PC-9 (cell line): ENCODE measurements at regions of chr7 and their contacts with region 1.

Region 1: GRCh38 chr7:114554781-114555537 is 140.3 kb downstream of the FOXP2 start:
- DNase-seq: no peak
- H3K4me3 ChIP-seq: no peak overlapping the region
- H3K27ac ChIP-seq: no peak overlapping the region
- H3K4me1 ChIP-seq: no peaks in the 10 kb centered on the region
- H3K27me3 ChIP-seq: no peaks in the 10 kb centered on the region
- CTCF ChIP-seq: no peak

Region 2: GRCh38 chr7:114508086-114508485 is 46.9 kb before region 1 on chr7:
- CTCF ChIA-PET with region 1: no interaction called
- POLR2A ChIA-PET with region 1: no interaction called
- intact Hi-C with region 1: no loop called
- DNase-seq: no peak
- H3K4me3 ChIP-seq: no peak overlapping the region
- H3K27ac ChIP-seq: no peak overlapping the region
- H3K4me1 ChIP-seq: no peaks in the 10 kb centered on the region
- H3K27me3 ChIP-seq: no peaks in the 10 kb centered on the region
- CTCF ChIP-seq: no peak

Region 3: DNA sequence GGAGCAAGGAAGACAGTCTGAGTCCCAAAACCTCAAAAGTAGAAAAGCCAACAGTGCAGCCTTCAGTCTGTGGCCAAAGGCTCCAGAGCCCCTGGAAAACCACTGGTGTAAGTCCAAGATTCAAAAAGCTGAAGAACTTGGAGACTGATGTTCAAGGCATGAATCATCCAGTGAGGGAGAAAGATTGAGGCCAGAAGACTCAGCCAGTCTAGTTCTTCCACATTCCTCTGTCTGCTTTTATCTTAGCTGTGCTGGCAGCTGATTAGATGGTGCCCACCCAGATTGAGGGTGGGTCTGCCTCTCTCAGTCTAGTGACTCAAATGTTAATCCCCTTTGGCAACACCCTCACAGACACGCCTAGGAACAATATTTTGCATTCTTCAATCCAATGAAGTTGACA is 346.8 kb after region 1 on chr7:
- CTCF ChIA-PET with region 1: no interaction called
- POLR2A ChIA-PET with region 1: no interaction called
- intact Hi-C with region 1: loop called (anchors 10 kb)
- DNase-seq: peak; percentile 79 to 88
- H3K4me3 ChIP-seq: 0 out of 2 replicates have a peak overlapping the region, but pooled peaks have one; percentile 12
- H3K27ac ChIP-seq: peak overlapping the region; percentile 22
- H3K4me1 ChIP-seq: peaks cover 17% of the 10 kb centered on the region
- H3K27me3 ChIP-seq: no peaks in the 10 kb centered on the region
- CTCF ChIP-seq: no peak

Region 4: DNA sequence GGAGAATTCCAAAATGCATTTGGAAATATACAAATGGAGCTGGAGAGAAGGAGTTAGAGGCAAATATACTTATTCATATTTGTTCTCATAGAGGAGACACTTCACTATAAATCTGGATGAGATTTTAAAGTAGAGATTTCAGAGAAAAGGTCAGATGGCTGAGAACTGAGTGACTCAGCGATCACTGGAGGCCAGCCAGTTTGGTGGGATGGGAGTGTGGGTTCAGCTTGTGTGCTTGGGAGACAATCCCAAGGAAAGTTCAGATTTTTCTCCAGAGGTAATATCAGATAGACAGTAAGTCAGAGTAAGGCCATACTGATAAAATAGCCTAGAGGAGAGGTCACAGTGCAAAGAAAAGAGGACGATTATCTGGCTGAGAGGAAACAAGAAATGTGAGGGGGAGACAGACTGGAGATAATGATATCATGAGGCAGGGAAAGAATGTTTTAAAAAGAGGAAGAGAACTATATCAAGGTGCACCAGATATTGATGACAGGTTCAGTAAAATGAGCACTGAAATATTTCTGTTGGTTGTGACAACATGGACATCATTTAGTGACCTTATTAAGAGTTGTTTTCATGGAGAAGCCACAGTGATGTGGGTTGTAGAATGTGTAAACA is 433.9 kb after region 1 on chr7:
- CTCF ChIA-PET with region 1: no interaction called
- POLR2A ChIA-PET with region 1: no interaction called
- intact Hi-C with region 1: no loop called
- DNase-seq: peak in 1 of 2 experiments; percentile 61
- H3K4me3 ChIP-seq: no peak overlapping the region
- H3K27ac ChIP-seq: peak overlapping the region; percentile 40
- H3K4me1 ChIP-seq: peaks cover 16% of the 10 kb centered on the region
- H3K27me3 ChIP-seq: no peaks in the 10 kb centered on the region
- CTCF ChIP-seq: no peak